Right ventricle myocardium inferior (tissue), 1 donor: ENCODE measurements at regions of chr10 and their contacts with region 1.

Region 1: DNA sequence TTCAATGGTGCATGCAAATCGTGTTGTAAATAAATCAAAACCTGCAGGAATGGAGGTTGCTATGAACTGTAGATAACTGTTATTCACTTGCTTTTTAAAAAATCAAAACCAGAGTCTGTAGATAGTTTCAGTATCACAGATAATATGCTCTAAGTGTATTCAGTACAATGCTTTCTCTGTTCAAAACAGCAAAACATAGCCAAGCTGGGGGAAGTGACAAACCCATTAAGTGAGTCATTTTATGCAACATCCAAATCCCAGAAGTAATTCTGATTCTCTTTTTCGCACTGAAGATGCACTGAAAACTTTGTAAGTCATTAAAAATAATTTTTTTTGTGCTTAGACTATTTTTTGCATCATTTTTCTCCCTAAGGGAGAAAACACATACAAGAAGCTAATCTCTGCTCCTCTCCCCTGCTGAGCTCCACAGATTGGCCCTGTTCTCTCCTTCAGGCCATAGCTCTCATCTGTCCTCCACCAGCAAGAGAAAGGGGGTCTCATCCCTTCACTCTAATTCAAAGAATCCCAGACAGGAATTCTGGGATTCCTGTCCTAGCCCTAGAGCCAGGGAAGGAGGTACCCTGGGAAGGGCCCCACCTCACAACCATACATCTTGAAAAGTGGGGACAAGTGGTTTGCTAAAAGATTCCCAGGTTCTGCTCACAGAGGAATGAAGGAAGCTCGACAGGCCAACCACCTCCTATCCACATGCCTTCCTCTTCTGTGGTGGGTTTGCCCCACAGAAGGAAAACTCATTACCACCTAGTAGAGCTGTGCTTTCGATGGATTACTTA is 4.9 kb downstream of the PRTFDC1 start:
- DNase-seq: no peak
- ATAC-seq: peak; percentile 78

Region 2: GRCh38 chr10:24873281-24873683 is 74.2 kb before region 1 on chr10:
- intact Hi-C with region 1: loop called (anchors 10 kb)
- DNase-seq: no peak
- ATAC-seq: peak; percentile 71

Region 3: DNA sequence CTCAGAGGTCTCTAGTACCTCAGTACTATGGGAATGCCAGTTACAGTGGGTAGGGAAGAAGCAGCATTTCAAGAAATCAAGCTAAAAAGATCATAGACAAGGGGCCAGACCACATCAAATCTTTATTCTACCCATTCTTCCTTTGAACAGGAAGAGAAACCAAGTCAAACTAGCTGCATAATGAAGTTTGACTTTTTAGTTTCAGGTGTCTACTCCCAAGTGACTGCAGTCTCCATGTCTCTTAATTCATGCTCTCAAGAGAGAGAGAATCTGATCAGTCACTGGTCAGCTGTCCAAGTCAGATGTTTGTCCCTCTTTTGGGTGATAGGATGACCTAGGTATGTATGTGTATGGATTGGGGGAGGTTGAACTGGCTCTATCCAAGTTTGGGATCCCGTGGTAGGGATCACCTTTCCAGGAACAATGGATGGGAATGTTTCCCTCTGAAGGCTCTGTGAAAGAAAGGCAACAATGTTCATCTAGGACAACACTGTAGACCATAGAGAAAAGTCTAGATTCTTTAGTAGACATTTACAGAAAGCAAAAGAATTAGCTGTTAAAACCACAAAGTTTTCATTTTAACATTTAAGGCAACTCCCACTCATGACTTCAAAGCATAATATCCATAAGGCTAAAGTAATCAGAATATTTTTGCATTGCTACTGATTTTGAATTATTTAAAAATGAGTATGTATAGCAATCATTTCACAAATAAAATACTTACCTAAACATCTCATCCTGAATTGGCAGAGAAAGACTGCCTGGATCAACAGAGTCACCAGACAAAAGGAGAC is 35.0 kb after region 1 on chr10:
- intact Hi-C with region 1: loop called (anchors 5 kb)
- DNase-seq: no peak
- ATAC-seq: no peak

Region 4: DNA sequence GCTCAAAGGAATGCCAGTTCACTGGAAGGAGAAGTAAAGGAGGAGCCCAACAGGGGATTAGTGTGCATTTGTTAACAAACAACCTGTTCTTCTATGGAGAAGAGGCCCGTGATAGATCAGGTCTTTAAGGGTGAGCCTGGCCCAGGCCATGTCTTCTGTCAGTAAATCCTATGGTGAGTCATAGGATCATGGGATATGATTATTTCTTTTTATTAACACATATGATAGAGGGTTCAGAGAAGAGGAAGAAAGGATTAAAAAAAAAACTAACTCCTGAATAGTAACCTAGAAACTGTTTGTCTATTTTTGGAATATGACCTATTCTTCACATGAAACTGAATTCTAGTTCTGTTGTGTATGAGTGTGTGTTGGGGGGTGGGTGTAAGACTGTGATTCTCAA is 297.7 kb after region 1 on chr10:
- intact Hi-C with region 1: no loop called
- DNase-seq: no peak
- ATAC-seq: no peak